Activated T-helper 1 cell treated with anti-CD3 and anti-CD28 coated beads, Interleukin-12 subunit alpha, Interleukin-12 subunit beta, Interleukin-2, Interleukin-4 antibody, amounts not matched to agents 30 ng/mL and 10 ng/mL and 1 ng/mL, durations not matched to agents 14 hours and 24 hours and 36 hours (primary cell): ENCODE measurements at regions of chr2 and their contacts with region 1.

Region 1: GRCh38 chr2:173934895-173935294 is 30.3 kb downstream of the SP3 start:
- DNase-seq: no peak
- H3K4me3 Mint-ChIP-seq: no peak overlapping the region
- H3K27ac Mint-ChIP-seq: peak overlapping the region; percentile 4
- H3K4me1 Mint-ChIP-seq: peaks cover 17% of the 10 kb centered on the region
- H3K27me3 Mint-ChIP-seq: no peaks in the 10 kb centered on the region

Region 2: GRCh38 chr2:173205375-173205774 is 729.5 kb before region 1 on chr2:
- intact Hi-C with region 1: no loop called
- DNase-seq: no peak
- H3K4me3 Mint-ChIP-seq: no peak overlapping the region
- H3K27ac Mint-ChIP-seq: no peak overlapping the region
- H3K4me1 Mint-ChIP-seq: peaks cover 2% of the 10 kb centered on the region
- H3K27me3 Mint-ChIP-seq: no peaks in the 10 kb centered on the region

Region 3: DNA sequence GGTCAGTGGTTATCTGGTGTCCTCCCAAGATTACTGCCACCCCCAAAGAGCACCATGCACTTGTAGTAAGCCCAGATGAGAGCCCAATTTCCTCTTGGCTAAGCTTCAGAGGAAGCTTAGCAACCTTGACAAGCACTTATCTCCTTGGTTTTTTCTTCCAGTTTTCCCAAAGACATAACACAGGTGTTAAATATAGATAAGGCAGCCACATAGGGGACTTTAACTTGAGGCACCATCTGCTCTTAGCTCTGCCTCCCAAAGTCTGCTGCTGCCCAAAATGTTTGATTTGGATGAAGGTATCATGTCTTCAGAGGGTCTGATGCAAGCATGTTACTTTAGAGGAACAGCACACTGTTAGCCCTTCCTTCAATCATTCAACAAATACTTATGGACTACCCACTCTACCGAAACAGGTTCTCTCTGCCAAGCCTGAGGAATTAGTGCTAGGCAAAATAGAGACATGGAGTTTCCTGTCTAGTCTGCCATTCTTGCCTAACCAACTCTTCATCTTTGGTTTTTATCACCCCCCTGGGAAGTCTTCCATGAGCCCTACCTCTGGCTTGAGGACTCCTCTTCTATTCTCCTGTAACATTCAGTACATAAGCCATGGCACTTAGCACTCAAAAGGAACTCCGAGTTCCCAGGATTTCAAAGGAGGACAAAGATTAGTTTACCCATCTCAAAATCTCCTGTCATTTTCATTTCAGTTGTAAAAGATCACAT is 43.4 kb before region 1 on chr2:
- intact Hi-C with region 1: loop called (anchors 5 kb)
- DNase-seq: no peak
- H3K4me3 Mint-ChIP-seq: no peak overlapping the region
- H3K27ac Mint-ChIP-seq: no peak overlapping the region
- H3K4me1 Mint-ChIP-seq: peaks cover 16% of the 10 kb centered on the region
- H3K27me3 Mint-ChIP-seq: peaks cover 2% of the 10 kb centered on the region

Region 4: GRCh38 chr2:173922760-173923159 is 12.1 kb before region 1 on chr2:
- intact Hi-C with region 1: loop called (anchors 2 kb)
- DNase-seq: no peak
- H3K4me3 Mint-ChIP-seq: no peak overlapping the region
- H3K27ac Mint-ChIP-seq: no peak overlapping the region
- H3K4me1 Mint-ChIP-seq: peaks cover 49% of the 10 kb centered on the region
- H3K27me3 Mint-ChIP-seq: no peaks in the 10 kb centered on the region

Region 5: GRCh38 chr2:174094542-174094941 is 159.6 kb after region 1 on chr2:
- intact Hi-C with region 1: no loop called
- DNase-seq: no peak
- H3K4me3 Mint-ChIP-seq: no peak overlapping the region
- H3K27ac Mint-ChIP-seq: no peak overlapping the region
- H3K4me1 Mint-ChIP-seq: no peaks in the 10 kb centered on the region
- H3K27me3 Mint-ChIP-seq: no peaks in the 10 kb centered on the region